ENCODE measurements at regions of chr6 and their contacts with region 1.

Region 1: DNA sequence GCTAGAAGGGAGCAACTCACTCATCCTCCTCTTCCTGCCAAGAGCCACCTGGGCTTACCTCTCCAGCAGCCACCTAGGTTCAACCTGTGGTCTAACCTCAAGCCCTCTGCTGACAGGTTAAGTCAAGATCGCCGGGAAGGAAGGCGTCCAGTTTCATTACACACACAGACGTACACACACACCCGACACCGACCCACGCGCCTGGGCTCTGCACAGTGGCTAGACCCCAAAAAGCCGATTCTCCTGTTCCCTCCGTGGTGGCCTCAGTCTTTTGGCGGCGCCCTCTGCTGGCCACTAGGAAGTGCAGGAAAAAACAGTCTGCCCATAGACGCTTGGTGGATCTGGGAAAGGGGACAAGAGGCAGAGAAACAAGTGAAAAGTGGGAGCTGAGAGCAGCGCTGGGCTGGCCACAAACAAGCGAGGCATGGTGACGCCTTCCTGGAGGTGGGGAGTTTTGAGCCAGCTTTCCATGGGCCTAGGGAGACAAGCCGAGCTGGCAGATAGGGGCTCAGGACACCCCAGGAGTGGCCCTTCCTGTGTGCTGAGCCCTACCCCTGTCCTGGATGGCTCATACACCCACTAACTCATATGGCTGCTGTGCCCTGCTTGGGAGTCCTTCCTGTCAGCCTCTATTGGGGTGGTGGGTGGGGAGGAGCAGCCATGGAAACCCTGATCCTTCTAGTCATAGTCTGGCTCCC is 52.7 kb downstream of the MRPL14 start:
- DNase-seq: peak; percentile 89
- ATAC-seq: peak; percentile 55
- H3K4me3 Mint-ChIP-seq: peak overlapping the region; percentile 79
- H3K27ac Mint-ChIP-seq: peak overlapping the region; percentile 91
- H3K4me1 Mint-ChIP-seq: peaks cover 17% of the 10 kb centered on the region
- H3K27me3 Mint-ChIP-seq: peaks cover 16% of the 10 kb centered on the region

Region 2: DNA sequence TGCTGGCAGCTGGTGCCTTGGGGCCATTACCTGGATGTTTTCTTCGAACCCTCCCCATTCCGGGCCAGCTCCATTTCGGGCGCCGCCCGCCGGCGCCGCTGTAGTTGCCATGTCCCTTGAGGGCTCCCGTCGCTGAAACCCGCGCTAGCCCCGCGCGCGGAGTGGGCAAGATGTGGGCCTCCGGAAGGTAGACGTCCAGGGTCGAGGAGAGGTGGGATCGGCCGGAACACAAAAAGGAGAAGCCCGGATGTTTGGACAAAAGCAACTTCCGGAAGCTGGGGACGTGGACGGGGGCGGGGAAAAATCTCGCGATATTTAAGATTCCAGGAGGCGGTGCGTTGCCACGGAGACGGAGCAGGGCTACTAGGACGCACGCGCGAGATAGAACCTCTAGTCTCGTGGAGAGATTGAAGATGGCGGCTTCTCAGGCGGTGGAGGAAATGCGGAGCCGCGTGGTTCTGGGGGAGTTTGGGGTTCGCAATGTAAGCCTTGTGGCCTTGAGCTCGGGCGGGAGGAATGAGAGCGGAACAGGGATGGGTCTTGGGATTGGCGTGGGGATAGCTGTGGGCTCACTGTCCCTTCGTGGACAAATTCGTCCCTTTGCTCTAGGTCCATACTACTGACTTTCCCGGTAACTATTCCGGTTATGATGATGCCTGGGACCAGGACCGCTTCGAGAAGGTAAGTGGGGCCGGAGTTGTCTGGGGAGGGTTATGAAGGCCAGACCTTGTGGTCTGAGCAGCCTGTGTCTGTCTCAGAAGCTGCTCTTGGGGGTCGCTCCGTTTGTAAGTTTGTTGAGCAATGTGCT is 557.7 kb before region 1 on chr6 and contains the starts of genes POLR1C and YIPF3:
- CTCF ChIA-PET with region 1: interaction called, 5 read pairs
- POLR2A ChIA-PET with region 1: no interaction called
- intact Hi-C with region 1: loop called in 1 of 2 experiments (anchors 2 kb)
- DNase-seq: peak; percentile 98
- ATAC-seq: peak; percentile 93
- H3K4me3 Mint-ChIP-seq: no peak within 1 kb of the TSS
- H3K27ac Mint-ChIP-seq: no peak within 1 kb of the TSS
- H3K4me1 Mint-ChIP-seq: peaks cover 32% of the 10 kb centered on the region
- H3K27me3 Mint-ChIP-seq: no peaks in the 10 kb centered on the region
- total RNA-seq, gene POLR1C: 43.4 to 52.9 TPM
- total RNA-seq, gene YIPF3: 38.0 to 39.6 TPM

Region 3: DNA sequence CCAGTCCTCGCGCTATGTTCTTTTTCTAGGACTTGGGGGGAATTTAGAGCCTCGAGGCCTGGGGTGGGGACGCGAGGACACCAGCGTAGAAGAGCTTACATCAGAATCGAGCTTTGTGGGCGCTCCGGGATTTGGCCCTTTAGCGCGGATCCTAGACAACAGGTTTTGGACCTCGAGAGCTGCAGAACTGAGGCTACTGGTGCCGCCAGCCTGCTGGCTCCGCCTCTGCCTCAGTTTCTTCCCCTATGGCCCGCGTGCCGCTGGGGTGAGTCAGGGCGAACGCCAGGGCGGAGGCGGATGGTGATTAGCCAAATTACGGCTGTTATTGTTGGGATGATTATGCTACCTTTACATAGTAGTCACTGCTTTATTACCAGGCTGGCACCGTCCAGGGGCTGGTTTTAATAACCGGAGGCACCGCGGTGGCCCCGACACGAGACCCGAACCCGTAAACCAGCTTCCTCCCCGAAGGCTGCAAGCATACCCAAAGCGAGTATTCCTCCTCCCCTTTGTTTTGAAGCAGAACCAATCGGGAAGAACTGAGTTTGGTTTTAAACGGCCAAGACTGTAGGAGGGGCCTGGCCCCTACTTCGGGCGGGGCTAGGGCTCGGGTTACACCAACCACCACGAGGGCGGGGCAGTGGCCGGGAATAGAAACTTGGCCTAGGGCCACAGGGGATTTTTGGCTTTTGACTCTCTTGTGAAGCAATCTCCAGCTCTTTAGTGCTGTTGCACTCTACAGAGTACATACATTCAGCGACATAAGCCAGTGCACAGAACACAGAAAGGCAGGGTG is 444.9 kb before region 1 on chr6:
- CTCF ChIA-PET with region 1: interaction called, 3 read pairs
- POLR2A ChIA-PET with region 1: no interaction called
- intact Hi-C with region 1: loop called in 1 of 2 experiments (anchors 1 kb)
- DNase-seq: peak; percentile 96
- ATAC-seq: peak; percentile 77
- H3K4me3 Mint-ChIP-seq: peak overlapping the region; percentile 88
- H3K27ac Mint-ChIP-seq: peak overlapping the region; percentile 100
- H3K4me1 Mint-ChIP-seq: peaks cover 33% of the 10 kb centered on the region
- H3K27me3 Mint-ChIP-seq: no peaks in the 10 kb centered on the region

Region 4: DNA sequence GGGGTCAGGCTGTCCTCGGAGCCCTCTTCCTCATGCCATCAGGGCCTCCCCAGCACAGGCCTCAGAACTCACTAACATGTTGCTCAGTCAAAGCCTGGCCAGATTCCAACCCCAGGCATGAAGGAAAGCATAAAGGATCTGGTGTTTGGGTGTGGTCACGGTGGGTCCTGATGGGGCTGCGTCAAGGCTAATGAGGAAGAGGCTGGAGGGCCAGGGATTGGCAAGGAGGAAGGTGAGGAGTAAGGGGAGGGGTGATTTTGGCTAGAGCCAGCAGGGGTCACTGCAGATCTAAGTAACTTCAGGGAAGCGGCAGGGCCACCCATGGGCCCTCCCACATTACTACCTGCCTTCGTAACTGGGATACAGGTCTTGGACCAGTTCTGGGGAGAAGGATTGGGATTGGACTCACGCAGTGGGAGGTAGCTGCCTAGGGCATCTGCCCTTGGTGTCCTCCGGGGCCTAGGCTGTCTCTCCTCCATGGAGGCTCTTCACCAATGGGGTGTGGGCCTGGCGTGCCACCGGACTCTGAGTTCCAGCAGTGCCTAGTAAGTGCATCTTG is 350.8 kb before region 1 on chr6:
- CTCF ChIA-PET with region 1: interaction called, 29 read pairs
- POLR2A ChIA-PET with region 1: interaction called, 4 read pairs
- intact Hi-C with region 1: loop called (anchors 1 kb)
- DNase-seq: peak; percentile 87
- ATAC-seq: peak; percentile 82
- H3K4me3 Mint-ChIP-seq: no peak overlapping the region
- H3K27ac Mint-ChIP-seq: peak overlapping the region; percentile 90
- H3K4me1 Mint-ChIP-seq: peaks cover 26% of the 10 kb centered on the region
- H3K27me3 Mint-ChIP-seq: no peaks in the 10 kb centered on the region

Region 5: GRCh38 chr6:43803783-43804549 is 270.6 kb before region 1 on chr6:
- CTCF ChIA-PET with region 1: interaction called, 10 read pairs
- POLR2A ChIA-PET with region 1: no interaction called
- intact Hi-C with region 1: no loop called
- DNase-seq: peak; percentile 48
- ATAC-seq: peak; percentile 82
- H3K4me3 Mint-ChIP-seq: no peak overlapping the region
- H3K27ac Mint-ChIP-seq: no peak overlapping the region
- H3K4me1 Mint-ChIP-seq: peaks cover 5% of the 10 kb centered on the region
- H3K27me3 Mint-ChIP-seq: no peaks in the 10 kb centered on the region

Region 6: GRCh38 chr6:44022296-44022661 is 52.3 kb before region 1 on chr6:
- CTCF ChIA-PET with region 1: no interaction called
- POLR2A ChIA-PET with region 1: no interaction called
- intact Hi-C with region 1: no loop called
- DNase-seq: peak; percentile 2
- ATAC-seq: no peak
- H3K4me3 Mint-ChIP-seq: no peak overlapping the region
- H3K27ac Mint-ChIP-seq: no peak overlapping the region
- H3K4me1 Mint-ChIP-seq: no peaks in the 10 kb centered on the region
- H3K27me3 Mint-ChIP-seq: peaks cover 4% of the 10 kb centered on the region

Region 7: GRCh38 chr6:44127186-44128019 is 52.8 kb after region 1 on chr6 and contains the starts of genes MRPL14 and TMEM63B:
- CTCF ChIA-PET with region 1: no interaction called
- POLR2A ChIA-PET with region 1: no interaction called
- intact Hi-C with region 1: loop called in 1 of 2 experiments (anchors 1 kb)
- DNase-seq: peak; percentile 95
- ATAC-seq: peak; percentile 81
- H3K4me3 Mint-ChIP-seq: peak within 1 kb of the TSS; percentile 82
- H3K27ac Mint-ChIP-seq: peak within 1 kb of the TSS; percentile 96
- H3K4me1 Mint-ChIP-seq: peaks cover 46% of the 10 kb centered on the region
- H3K27me3 Mint-ChIP-seq: no peaks in the 10 kb centered on the region
- total RNA-seq, gene MRPL14: 29.5 to 43.3 TPM
- total RNA-seq, gene TMEM63B: 10.9 to 15.2 TPM

Region 8: GRCh38 chr6:44925100-44925739 is 850.6 kb after region 1 on chr6:
- CTCF ChIA-PET with region 1: no interaction called
- POLR2A ChIA-PET with region 1: no interaction called
- intact Hi-C with region 1: no loop called
- DNase-seq: peak; percentile 22
- ATAC-seq: peak; percentile 76
- H3K4me3 Mint-ChIP-seq: no peak overlapping the region
- H3K27ac Mint-ChIP-seq: peak overlapping the region; percentile 13
- H3K4me1 Mint-ChIP-seq: peaks cover 49% of the 10 kb centered on the region
- H3K27me3 Mint-ChIP-seq: no peaks in the 10 kb centered on the region